Activated B cell treated with CpG ODN at 0.5 μM for 24 hours (primary cell): ENCODE measurements at regions of chr7 and their contacts with region 1.

Region 1: GRCh38 chr7:111741811-111742240 is 179.5 kb upstream of the IMMP2L start:
- DNase-seq: no peak
- ATAC-seq: peak; percentile 87
- H3K4me3 Mint-ChIP-seq: no peak overlapping the region
- H3K27ac Mint-ChIP-seq: no peak overlapping the region
- H3K4me1 Mint-ChIP-seq: no peaks in the 10 kb centered on the region
- H3K27me3 Mint-ChIP-seq: peaks cover 3% of the 10 kb centered on the region
- CTCF ChIP-seq: no peak

Region 2: DNA sequence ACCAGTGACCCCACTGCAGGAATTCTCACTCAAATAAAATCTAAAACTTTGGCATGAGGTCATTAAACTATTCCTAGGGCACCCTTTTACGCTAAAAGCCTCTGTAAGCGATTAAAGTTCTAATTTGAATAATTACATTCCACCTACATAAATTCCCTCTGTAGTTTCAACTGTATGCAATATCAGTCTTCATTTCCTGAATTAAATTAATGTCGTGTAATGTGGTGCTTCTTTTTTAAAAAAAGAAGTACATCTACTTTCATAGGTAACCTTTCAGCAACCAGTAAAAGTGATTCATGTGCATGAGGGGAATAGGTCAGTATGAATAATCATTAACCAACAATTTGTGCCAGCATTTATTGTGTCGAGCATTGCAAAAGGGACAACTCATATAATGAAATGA is 224.3 kb before region 1 on chr7:
- CTCF ChIA-PET with region 1: no interaction called
- POLR2A ChIA-PET with region 1: no interaction called
- intact Hi-C with region 1: no loop called
- DNase-seq: no peak
- ATAC-seq: no peak
- H3K4me3 Mint-ChIP-seq: no peak overlapping the region
- H3K27ac Mint-ChIP-seq: no peak overlapping the region
- H3K4me1 Mint-ChIP-seq: no peaks in the 10 kb centered on the region
- H3K27me3 Mint-ChIP-seq: no peaks in the 10 kb centered on the region
- CTCF ChIP-seq: no peak

Region 3: DNA sequence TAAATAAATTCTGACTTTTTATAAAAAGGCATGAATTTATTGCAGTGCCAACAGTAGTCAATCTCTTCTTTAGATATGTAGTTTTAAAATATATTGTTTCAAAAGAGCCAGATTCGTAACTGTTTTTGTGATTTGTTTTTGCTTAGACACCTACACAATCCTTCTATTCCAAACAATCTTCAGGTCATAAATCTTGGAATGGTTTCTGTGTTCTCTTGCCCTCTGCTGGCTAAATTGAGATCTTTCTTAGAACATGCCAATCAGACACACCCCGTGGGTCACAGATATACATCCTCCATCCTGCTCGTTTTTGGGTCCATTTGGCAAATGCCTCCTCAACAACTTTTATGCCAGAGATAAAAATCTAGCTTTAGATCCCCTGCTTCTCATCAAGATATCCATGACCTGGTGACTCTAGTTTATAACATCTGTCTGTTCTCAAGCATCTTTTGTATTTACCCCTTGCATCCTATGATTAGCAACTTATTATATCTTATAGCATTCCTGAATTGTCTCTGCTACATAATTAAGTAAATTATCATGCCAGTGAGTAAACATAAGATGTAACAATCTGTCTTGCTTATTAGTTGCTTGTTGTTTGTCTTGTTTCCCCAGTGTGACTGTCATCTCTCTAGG is 673.1 kb after region 1 on chr7:
- CTCF ChIA-PET with region 1: interaction called, 4 read pairs
- POLR2A ChIA-PET with region 1: no interaction called
- intact Hi-C with region 1: loop called (anchors 1 kb)
- DNase-seq: no peak
- ATAC-seq: no peak
- H3K4me3 Mint-ChIP-seq: no peak overlapping the region
- H3K27ac Mint-ChIP-seq: no peak overlapping the region
- H3K4me1 Mint-ChIP-seq: no peaks in the 10 kb centered on the region
- H3K27me3 Mint-ChIP-seq: peaks cover 16% of the 10 kb centered on the region
- CTCF ChIP-seq: no peak

Region 4: DNA sequence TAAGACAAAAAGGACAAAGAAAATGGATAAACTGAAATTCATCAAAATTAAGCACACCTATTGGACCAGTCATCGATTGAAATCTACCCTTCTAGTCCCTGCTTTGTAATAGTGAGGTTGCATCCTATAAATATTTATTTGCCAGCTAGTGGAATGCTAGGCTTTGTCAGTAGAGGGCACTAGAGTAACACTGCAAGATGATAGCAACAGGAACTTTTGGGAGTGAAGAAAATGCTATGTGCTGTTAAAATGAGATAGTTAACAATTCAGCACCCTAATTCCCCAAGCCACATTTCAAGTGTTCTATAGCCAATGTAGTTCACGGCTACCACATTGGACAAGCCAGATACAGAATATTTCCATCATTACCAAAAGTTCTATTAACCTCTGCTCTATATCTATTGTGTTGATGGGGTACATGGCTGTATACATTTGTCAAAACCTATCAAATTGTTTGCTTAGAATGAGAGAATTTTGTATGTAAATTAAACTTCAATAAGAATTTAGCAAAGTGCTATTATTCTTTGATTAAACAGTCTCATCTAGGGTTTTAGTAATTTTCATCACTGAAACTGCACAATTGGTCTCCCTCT is 808.7 kb after region 1 on chr7:
- CTCF ChIA-PET with region 1: no interaction called
- POLR2A ChIA-PET with region 1: no interaction called
- intact Hi-C with region 1: loop called (anchors 1 kb)
- DNase-seq: no peak
- ATAC-seq: peak; percentile 49
- H3K4me3 Mint-ChIP-seq: no peak overlapping the region
- H3K27ac Mint-ChIP-seq: no peak overlapping the region
- H3K4me1 Mint-ChIP-seq: no peaks in the 10 kb centered on the region
- H3K27me3 Mint-ChIP-seq: peaks cover 1% of the 10 kb centered on the region
- CTCF ChIP-seq: no peak

Region 5: DNA sequence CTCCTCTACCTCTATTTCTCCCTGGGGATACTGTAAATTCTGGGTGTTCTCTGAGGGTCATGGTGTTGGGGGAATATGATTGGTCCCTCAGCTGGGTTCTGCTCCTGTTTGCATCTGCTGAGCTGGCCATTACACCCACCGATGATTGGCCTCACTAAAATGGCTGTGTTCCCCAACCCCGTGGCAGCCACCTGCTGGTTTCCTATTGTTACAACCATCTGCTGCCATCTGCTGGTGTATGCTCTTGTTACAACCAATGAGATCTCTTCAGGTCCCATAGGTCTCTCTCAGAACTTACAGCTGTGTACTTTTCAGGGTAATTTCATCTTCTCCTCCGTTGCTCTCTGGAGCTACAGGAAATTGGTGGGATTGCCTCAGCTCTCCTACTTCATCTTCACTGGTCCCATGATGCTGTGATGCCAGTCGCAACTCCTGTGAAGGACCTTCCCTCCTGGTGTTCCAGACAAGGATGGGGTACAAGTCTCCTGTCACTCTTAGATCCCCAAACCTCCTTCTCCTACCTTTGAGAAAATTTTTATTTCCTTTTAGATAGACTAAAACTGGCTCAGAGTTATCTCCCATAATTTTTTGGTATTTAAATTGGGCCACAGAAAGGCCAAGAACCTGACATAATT is 1680.0 kb after region 1 on chr7:
- CTCF ChIA-PET with region 1: interaction called, 12 read pairs
- POLR2A ChIA-PET with region 1: no interaction called
- intact Hi-C with region 1: loop called (anchors 1 kb)
- DNase-seq: peak; percentile 32
- ATAC-seq: peak; percentile 99
- H3K4me3 Mint-ChIP-seq: no peak overlapping the region
- H3K27ac Mint-ChIP-seq: no peak overlapping the region
- H3K4me1 Mint-ChIP-seq: peaks cover 3% of the 10 kb centered on the region
- H3K27me3 Mint-ChIP-seq: no peaks in the 10 kb centered on the region
- CTCF ChIP-seq: no peak

Region 6: GRCh38 chr7:113710310-113711106 is 1968.7 kb after region 1 on chr7:
- CTCF ChIA-PET with region 1: no interaction called
- POLR2A ChIA-PET with region 1: no interaction called
- intact Hi-C with region 1: loop called (anchors 1 kb)
- DNase-seq: no peak
- ATAC-seq: peak; percentile 85
- H3K4me3 Mint-ChIP-seq: no peak overlapping the region
- H3K27ac Mint-ChIP-seq: no peak overlapping the region
- H3K4me1 Mint-ChIP-seq: no peaks in the 10 kb centered on the region
- H3K27me3 Mint-ChIP-seq: no peaks in the 10 kb centered on the region
- CTCF ChIP-seq: peak; percentile 76